Activated CD4-positive, alpha-beta memory T cell treated with anti-CD3 and anti-CD28 coated beads, Interleukin-2, amount 10 ng/mL, durations not matched to agents 7 days and 5 days (primary cell): ENCODE measurements at regions of chr5 and their contacts with region 1.

Region 1: GRCh38 chr5:75236322-75237316 is at the start of gene ANKRD31:
- DNase-seq: peak; percentile 88
- H3K4me3 Mint-ChIP-seq: peak within 1 kb of the TSS; percentile 86
- H3K27ac Mint-ChIP-seq: peak within 1 kb of the TSS; percentile 79
- H3K4me1 Mint-ChIP-seq: peaks cover 15% of the 10 kb centered on the region
- H3K27me3 Mint-ChIP-seq: no peaks in the 10 kb centered on the region
- total RNA-seq, gene ANKRD31: 0.05 to 0.18 TPM

Region 2: DNA sequence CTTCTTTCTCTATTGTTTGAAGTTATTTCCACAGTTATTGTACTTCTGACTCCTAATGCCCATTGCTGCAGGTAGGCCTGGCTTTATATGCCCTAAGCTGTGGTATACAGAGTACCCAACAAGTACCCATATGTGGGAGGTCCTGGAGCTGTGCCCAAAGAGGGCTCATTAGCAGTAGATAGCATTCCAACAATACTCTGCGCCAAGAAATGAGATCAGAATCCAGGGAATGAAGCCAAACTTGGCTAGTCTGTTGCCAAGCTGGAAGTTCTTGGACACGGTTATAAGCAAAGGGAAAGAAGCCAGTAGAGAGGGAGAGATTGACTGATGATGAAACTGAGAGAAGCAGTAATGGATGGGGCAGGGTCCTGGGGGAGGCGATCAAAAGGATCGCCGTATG is 340.7 kb before region 1 on chr5:
- CTCF ChIA-PET with region 1: no interaction called
- POLR2A ChIA-PET with region 1: no interaction called
- DNase-seq: no peak
- H3K4me3 Mint-ChIP-seq: no peak overlapping the region
- H3K27ac Mint-ChIP-seq: no peak overlapping the region
- H3K4me1 Mint-ChIP-seq: no peaks in the 10 kb centered on the region
- H3K27me3 Mint-ChIP-seq: no peaks in the 10 kb centered on the region

Region 3: DNA sequence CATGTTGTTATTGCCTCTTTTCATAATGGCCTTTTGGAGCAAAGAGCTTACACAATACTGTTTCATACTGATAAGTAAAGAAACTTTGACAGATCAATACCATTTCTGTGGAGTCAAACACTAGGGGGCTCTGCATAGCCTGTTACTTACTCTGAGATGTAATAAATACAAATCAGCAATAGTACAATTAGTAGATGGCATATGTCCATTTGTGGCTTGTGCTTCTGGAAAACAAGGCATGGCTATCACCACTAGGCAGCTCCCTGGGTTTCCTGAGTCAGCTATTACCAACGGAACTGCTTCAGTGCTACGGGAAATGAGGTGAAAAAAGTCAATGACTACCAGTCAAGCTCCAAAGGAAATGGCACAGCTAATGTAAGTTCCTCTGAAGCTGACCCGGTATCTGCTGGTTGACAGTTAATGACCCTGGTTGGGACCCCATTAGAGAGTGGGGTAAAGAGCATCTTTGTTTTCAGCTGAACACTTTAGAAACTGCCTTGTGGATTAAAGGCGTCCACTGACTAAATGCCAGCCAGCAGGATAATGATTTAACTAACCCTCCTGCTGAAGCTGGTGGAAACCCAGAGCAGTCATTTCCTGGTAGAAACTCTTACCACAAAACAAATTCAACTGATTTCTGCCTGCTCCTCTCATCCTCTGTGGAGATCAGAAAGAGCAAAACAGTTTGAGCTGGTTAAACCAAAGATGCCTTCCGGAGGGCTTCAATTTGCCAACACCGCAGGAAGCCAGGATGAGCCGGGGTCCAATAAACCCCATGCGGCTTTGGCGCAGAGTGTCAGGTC is 301.5 kb before region 1 on chr5:
- CTCF ChIA-PET with region 1: interaction called, 10 read pairs
- POLR2A ChIA-PET with region 1: no interaction called
- DNase-seq: peak; percentile 31
- H3K4me3 Mint-ChIP-seq: peak overlapping the region; percentile 23
- H3K27ac Mint-ChIP-seq: peak overlapping the region; percentile 75
- H3K4me1 Mint-ChIP-seq: peaks cover 30% of the 10 kb centered on the region
- H3K27me3 Mint-ChIP-seq: peaks cover 9% of the 10 kb centered on the region

Region 4: DNA sequence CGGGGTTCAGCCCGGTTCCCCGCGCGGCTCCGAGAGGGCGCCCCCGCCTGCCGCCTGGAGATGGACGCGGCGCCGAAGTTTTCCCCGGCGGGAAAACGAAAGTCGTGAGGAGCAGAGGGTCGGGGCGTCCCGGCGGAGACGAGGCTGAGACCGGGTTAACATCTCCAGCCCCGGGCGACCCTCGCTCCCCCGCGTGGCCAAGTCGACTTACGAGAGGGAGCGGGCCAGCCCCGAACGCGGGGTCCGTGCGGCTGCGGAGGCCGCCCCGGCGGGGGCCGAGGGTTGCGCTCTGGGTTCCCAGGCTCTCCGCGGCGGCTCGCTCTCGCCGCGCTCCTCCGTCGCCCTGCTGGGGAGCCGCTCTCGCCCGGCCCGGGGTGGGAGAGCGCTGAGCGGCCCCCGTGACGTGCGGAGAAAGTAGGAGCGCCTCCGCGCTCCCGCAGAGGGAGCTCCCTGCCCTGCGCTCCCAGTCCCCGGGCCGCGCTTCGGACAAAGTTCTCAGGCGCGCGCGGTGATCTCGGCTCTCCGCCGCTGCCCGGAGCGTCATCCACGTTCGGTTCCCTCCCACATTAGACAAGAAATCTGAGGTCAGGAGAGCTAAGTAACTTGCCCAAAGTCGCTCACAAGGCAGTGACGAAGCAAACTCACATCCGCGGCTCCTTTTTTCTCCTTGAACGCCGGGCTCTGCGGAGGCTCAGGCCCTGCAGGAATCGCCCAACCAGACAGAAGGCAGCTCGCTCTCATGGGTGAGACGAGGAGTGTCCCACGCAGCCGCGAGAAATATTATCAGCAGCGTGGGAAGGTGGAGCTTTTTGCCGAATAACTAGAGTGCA is 183.1 kb before region 1 on chr5:
- CTCF ChIA-PET with region 1: interaction called, 13 read pairs
- POLR2A ChIA-PET with region 1: interaction called, 8 read pairs
- DNase-seq: peak; percentile 56
- H3K4me3 Mint-ChIP-seq: peak overlapping the region; percentile 78
- H3K27ac Mint-ChIP-seq: peak overlapping the region; percentile 69
- H3K4me1 Mint-ChIP-seq: peaks cover 68% of the 10 kb centered on the region
- H3K27me3 Mint-ChIP-seq: peaks cover 42% of the 10 kb centered on the region

Region 5: GRCh38 chr5:75668977-75669689 is 432.5 kb after region 1 on chr5:
- CTCF ChIA-PET with region 1: interaction called, 16 read pairs
- POLR2A ChIA-PET with region 1: no interaction called
- DNase-seq: peak; percentile 73
- H3K4me3 Mint-ChIP-seq: peak overlapping the region; percentile 68
- H3K27ac Mint-ChIP-seq: peak overlapping the region; percentile 83
- H3K4me1 Mint-ChIP-seq: peaks cover 35% of the 10 kb centered on the region
- H3K27me3 Mint-ChIP-seq: no peaks in the 10 kb centered on the region

Region 6: DNA sequence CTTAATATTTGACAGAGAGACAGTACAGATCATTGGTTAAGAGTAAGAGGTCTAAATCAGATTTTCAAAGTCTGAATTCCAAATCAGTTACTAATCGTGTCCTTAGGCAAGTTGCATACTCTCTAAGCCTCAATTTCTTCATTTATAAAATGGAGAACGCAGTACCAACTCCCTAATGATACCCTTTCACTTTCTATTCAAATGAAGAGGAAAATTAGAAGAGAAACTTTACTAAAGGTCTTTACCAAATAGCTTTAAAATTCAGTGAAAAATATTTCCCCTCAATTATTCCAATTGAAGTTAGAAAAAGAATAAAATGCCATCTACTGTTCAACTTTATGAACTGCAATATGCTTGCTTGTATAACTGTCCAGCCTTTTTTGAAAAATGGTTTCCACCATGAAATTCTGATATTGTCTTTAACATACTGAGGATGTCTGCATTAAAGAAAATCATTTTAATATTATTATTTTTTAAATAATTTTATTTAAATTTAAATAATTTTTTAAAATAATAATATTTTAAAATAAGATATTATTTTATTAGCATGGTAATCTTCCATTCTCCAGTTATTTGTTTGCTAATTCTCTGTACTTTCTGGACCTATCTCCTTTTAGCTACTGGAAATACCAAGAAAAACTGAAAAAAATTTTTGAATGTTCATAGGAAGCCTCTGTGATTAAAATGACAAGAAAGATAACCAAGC is 444.7 kb after region 1 on chr5:
- CTCF ChIA-PET with region 1: interaction called, 37 read pairs
- POLR2A ChIA-PET with region 1: interaction called, 18 read pairs
- DNase-seq: no peak
- H3K4me3 Mint-ChIP-seq: no peak overlapping the region
- H3K27ac Mint-ChIP-seq: no peak overlapping the region
- H3K4me1 Mint-ChIP-seq: peaks cover 16% of the 10 kb centered on the region
- H3K27me3 Mint-ChIP-seq: no peaks in the 10 kb centered on the region